ENCODE measurements at regions of chr10 and their contacts with region 1.

Region 1: DNA sequence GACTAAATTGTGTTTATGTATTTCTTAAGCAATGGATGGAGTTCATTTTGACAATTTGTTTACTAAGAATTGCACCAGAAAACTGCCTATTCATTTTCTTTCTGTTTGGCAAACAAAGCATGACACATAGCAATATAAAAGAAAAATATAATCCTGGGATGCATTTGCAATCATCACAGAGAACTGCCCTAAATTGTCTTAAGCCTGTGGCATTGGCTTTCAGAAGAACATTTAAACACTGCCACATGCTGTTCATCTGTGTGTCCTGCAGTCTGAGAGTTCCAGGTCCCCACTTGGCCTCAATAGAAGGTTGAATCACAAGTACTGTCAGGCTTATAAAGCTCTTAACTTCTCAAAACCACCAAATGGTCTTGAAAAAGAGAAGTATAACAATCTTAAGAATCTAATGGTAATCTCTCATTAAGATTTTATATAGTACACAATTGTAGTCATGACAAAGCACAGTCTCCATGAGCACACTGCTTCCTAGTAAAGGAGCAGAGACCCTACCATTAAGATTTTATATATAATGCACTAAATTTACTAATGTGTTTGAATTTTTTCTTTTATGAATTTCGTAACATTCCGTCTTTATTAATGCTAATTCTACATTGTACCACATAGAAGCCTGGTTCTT is 29.9 kb downstream of the RNLS start:
- DNase-seq: peak; percentile 66
- H3K4me3 ChIP-seq: no peak overlapping the region
- H3K27ac ChIP-seq: no peak overlapping the region
- H3K4me1 ChIP-seq: no peaks in the 10 kb centered on the region
- H3K27me3 ChIP-seq: no peaks in the 10 kb centered on the region
- CTCF ChIP-seq: peak; percentile 88 to 89

Region 2: DNA sequence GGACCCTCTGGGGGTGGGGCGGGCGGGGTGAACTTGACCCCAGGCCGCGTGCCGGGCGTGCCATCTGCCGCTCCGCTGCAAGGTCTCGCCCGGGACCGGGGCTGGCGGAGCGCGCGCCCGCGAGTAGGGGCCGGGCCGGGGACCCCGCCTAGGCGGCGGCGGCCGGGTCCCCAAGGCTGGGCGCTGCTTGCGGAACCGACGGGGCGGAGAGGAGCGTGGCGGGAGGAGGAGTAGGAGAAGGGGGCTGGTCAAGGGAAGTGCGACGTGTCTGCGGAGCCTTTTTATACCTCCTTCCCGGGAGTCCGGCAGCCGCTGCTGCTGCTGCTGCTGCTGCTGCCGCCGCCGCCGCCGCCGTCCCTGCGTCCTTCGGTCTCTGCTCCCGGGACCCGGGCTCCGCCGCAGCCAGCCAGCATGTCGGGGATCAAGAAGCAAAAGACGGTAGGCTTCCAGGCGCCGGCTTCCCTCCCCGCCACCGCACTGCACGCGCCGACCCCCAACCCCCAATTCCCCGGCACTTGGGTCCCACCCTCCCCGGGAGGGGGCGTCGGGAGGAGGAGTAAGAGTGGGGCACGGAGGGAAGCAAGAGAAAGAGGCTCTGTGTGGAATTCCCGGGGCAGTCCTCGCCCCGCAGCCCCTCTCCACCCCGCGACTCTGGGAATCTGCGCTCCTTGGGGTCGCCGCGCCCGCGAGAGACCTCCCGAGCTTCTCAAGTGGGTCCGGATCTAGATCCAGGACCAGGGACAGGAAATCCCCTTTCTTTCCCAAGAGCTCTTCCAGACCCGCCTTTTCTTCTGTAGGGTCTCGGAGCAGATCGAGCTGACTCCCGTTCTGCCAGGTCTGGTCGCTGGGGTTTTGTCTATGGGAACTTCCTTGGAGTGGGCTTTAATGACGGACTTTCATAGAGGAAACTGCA is 893.4 kb before region 1 on chr10 and contains the start of gene PAPSS2:
- CTCF ChIA-PET with region 1: no interaction called
- dilution Hi-C with region 1: no loop called
- in situ Hi-C with region 1: no loop called
- intact Hi-C with region 1: loop called (anchors 2 kb)
- DNase-seq: peak; percentile 46
- H3K4me3 ChIP-seq: peak within 1 kb of the TSS; percentile 35 to 79 (median 68)
- H3K27ac ChIP-seq: no peak within 1 kb of the TSS
- H3K4me1 ChIP-seq: peaks cover 3% of the 10 kb centered on the region
- H3K27me3 ChIP-seq: no peaks in the 10 kb centered on the region
- CTCF ChIP-seq: no peak
- total RNA-seq, gene PAPSS2: 3.8 to 9.1 TPM

Region 3: GRCh38 chr10:87976101-87976743 is 577.0 kb before region 1 on chr10:
- CTCF ChIA-PET with region 1: no interaction called
- dilution Hi-C with region 1: no loop called
- in situ Hi-C with region 1: no loop called
- intact Hi-C with region 1: loop called (anchors 10 kb)
- DNase-seq: peak; percentile 52
- H3K4me3 ChIP-seq: no peak overlapping the region
- H3K27ac ChIP-seq: no peak overlapping the region
- H3K4me1 ChIP-seq: peaks cover 13% of the 10 kb centered on the region
- H3K27me3 ChIP-seq: no peaks in the 10 kb centered on the region
- CTCF ChIP-seq: no peak

Region 4: GRCh38 chr10:88386821-88387773 is 166.1 kb before region 1 on chr10:
- CTCF ChIA-PET with region 1: no interaction called
- dilution Hi-C with region 1: no loop called
- in situ Hi-C with region 1: no loop called
- intact Hi-C with region 1: loop called (anchors 2 kb)
- DNase-seq: peak; percentile 42
- H3K4me3 ChIP-seq: no peak overlapping the region
- H3K27ac ChIP-seq: no peak overlapping the region
- H3K4me1 ChIP-seq: peaks cover 26% of the 10 kb centered on the region
- H3K27me3 ChIP-seq: no peaks in the 10 kb centered on the region
- CTCF ChIP-seq: no peak

Region 5: DNA sequence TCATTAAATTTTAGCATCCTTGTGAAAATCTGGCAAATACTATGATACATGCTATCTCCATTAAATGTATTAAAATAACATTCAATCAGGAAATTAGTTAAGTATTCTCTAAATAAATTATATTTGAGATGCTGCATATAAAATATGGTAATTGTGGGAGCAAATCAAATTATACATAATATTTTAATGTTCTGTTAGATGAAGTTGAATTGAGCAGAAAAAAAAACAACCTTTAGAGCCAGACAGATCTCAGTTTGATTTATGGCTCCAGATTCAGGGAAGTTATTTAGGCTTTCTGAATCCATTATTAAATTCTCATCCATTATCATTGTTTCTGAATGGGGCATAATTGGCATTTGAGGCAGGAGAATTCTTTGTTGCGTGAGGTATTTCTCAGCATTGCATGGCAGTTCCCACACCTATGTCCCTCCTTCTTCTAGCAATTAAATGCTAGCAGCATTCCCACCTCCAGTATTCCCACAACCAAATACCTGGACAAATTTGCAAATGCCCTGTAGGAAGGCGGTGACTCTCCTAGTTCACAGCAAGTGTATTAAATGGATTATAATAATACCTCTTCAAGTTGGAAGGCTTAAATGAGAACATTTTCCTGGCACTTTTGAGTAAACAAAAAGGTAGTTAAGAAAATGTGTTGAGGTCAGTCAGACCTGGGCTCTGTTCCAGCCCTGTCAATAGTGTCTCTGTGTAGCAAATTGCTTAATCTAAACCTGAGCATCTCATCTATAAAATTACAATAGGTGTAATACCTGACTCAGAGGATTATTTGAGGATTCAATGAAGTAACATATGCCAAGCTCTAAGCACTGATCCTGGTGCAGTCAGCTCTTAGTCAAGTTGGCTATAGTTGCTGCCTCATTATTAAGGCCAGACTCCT is 79.0 kb before region 1 on chr10:
- CTCF ChIA-PET with region 1: interaction called, 4 read pairs
- dilution Hi-C with region 1: no loop called
- in situ Hi-C with region 1: loop called in 1 of 2 experiments (anchors 5 kb)
- intact Hi-C with region 1: loop called (anchors 5 kb)
- DNase-seq: peak; percentile 97
- H3K4me3 ChIP-seq: no peak overlapping the region
- H3K27ac ChIP-seq: peak overlapping the region; percentile 87
- H3K4me1 ChIP-seq: peaks cover 51% of the 10 kb centered on the region
- H3K27me3 ChIP-seq: no peaks in the 10 kb centered on the region
- CTCF ChIP-seq: no peak